ENCODE measurements at regions of chr6 and their contacts with region 1.

Region 1: GRCh38 chr6:127516666-127517273 is 2.4 kb downstream of the MTCL3 start:
- DNase-seq: peak; percentile 48
- H3K4me3 Mint-ChIP-seq: peak overlapping the region; percentile 90
- H3K27ac Mint-ChIP-seq: peak overlapping the region; percentile 70
- H3K4me1 Mint-ChIP-seq: peaks cover 54% of the 10 kb centered on the region
- H3K27me3 Mint-ChIP-seq: peaks cover 14% of the 10 kb centered on the region

Region 2: GRCh38 chr6:127266178-127266891 is 250.4 kb before region 1 on chr6 and contains the start of gene RNF146:
- intact Hi-C with region 1: loop called (anchors 1 kb)
- DNase-seq: peak; percentile 63
- H3K4me3 Mint-ChIP-seq: peak within 1 kb of the TSS; percentile 100
- H3K27ac Mint-ChIP-seq: peak within 1 kb of the TSS; percentile 100
- H3K4me1 Mint-ChIP-seq: peaks cover 42% of the 10 kb centered on the region
- H3K27me3 Mint-ChIP-seq: peaks cover 9% of the 10 kb centered on the region
- total RNA-seq, gene RNF146: 18.3 and 20.5 TPM in 2 replicates

Region 3: DNA sequence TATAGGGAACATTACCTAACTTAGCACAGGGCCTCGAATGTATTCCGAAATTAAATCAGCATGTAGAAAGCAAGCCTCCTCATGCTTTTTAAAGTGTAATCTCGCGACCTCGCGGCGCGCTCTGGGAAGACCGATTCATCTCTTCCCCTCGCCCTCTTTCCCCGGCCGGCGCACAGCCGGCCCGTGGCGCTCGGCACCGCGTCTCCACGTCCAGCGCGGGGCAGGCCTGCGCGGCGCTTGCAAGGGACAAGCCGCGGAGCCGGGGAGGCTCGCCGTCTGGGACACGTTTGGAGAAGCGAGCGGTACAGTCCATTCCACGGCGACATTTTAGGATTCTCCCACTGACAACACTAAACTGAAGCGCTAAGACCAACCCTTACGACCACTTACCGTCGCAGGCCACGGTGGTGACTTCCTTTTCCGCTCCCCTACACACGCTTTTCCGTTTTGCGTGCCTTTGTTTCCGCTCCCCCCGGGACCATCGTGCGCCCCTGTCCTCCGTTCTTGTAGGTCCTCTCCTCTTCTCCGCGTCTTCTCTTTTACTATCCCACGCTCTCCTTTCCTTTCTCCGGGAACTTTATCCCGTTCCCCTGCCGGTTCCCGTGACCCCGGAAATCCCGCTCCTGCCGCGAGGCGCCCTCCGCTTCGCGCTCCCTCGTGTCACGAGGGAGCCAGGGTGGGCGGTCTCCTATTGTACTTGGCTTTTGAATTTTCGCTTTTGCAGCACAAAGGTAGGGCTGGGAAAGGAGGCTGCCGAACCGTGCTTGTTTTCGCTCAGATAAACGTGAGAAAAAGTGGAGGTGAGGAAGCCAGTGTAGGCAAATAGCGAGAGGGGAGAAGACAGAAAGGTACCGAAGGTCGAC is 173.6 kb before region 1 on chr6 and contains the start of gene ECHDC1:
- intact Hi-C with region 1: loop called (anchors 1 kb)
- DNase-seq: peak; percentile 63
- H3K4me3 Mint-ChIP-seq: no peak within 1 kb of the TSS
- H3K27ac Mint-ChIP-seq: no peak within 1 kb of the TSS
- H3K4me1 Mint-ChIP-seq: peaks cover 12% of the 10 kb centered on the region
- H3K27me3 Mint-ChIP-seq: no peaks in the 10 kb centered on the region
- total RNA-seq, gene ECHDC1: 57.4 and 61.8 TPM in 2 replicates

Region 4: GRCh38 chr6:127503022-127503421 is 13.7 kb before region 1 on chr6:
- intact Hi-C with region 1: no loop called
- DNase-seq: no peak
- H3K4me3 Mint-ChIP-seq: no peak overlapping the region
- H3K27ac Mint-ChIP-seq: no peak overlapping the region
- H3K4me1 Mint-ChIP-seq: peaks cover 15% of the 10 kb centered on the region
- H3K27me3 Mint-ChIP-seq: no peaks in the 10 kb centered on the region

Region 5: DNA sequence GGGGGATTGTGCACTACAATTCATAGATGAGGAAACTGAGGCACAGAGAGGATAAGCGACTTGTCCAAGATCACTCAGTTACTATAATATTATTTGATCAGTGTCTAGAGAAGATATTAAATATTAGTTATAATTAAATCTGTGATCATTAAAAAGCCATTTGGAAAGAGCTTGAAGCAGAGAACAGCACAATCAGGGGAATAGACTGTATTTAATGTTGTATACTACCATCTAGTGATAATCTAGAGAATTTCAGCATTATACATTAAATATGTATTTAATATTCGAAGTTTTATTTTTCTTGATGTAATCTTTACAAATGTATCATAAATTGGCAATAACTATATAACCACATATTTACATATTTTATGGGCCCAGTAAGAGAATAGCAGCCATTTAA is 22.5 kb after region 1 on chr6:
- intact Hi-C with region 1: loop called (anchors 2 kb)
- DNase-seq: no peak
- H3K4me3 Mint-ChIP-seq: no peak overlapping the region
- H3K27ac Mint-ChIP-seq: no peak overlapping the region
- H3K4me1 Mint-ChIP-seq: peaks cover 5% of the 10 kb centered on the region
- H3K27me3 Mint-ChIP-seq: peaks cover 17% of the 10 kb centered on the region

Region 6: GRCh38 chr6:127893541-127893940 is 376.8 kb after region 1 on chr6:
- intact Hi-C with region 1: loop called (anchors 5 kb)
- DNase-seq: no peak
- H3K4me3 Mint-ChIP-seq: peak overlapping the region; percentile 83
- H3K27ac Mint-ChIP-seq: peak overlapping the region; percentile 93
- H3K4me1 Mint-ChIP-seq: peaks cover 54% of the 10 kb centered on the region
- H3K27me3 Mint-ChIP-seq: no peaks in the 10 kb centered on the region

Measured in activated T-helper 1 cell treated with anti-CD3 and anti-CD28 coated beads, Interleukin-12 subunit alpha, Interleukin-12 subunit beta, Interleukin-2, Interleukin-4 antibody, amounts not matched to agents 30 ng/mL and 10 ng/mL and 1 ng/mL, durations not matched to agents 14 hours and 24 hours and 36 hours (primary cell).